ENCODE measurements at regions of chr1 and their contacts with region 1.

Region 1: DNA sequence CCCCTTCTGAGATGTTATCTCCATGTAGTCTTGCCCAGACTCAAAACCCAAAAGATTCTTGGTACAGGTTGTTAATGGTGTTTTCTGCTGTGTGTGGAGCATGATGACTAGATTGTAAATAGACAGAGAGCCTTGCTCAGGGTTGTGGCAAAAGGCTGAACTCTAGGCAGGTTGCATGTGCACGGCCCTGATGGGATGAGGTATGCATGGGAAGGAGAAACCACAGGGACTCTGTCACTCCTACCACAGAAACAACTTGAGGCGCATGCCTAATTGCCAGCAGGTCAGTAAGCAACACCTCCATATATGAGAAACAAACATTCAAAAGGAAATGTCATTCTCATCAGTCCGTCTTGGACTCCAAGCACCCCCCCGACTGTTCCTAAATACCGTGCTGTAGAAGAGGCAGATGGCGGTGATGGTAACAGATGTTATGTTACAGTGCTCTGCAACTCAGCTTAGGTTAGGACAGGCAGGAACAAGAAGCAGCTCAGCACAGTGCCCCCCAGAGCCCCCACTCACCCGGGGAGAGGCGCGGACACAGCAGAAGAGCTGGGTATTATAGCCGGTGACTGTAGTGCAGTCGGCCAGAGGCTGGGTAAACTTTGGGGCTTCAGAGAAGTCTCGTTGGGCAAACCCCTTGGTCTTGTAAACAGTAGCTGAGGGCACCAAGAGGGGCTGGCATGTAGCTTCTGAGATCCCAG is 10.9 kb downstream of the MYBPHL start:
- DNase-seq: no peak
- H3K4me3 ChIP-seq: no peak overlapping the region
- H3K27ac ChIP-seq: no peak overlapping the region
- H3K4me1 ChIP-seq: 0 out of 2 replicates have a peak, but pooled peaks cover 7% of the 10 kb centered on the region
- H3K27me3 ChIP-seq: no peaks in the 10 kb centered on the region
- CTCF ChIP-seq: no peak

Region 2: GRCh38 chr1:108559215-108560186 is 736.4 kb before region 1 on chr1 and contains the start of gene EEIG2:
- CTCF ChIA-PET with region 1: interaction called, 10 read pairs
- POLR2A ChIA-PET with region 1: no interaction called
- intact Hi-C with region 1: no loop called
- DNase-seq: peak; percentile 69 to 89
- H3K4me3 ChIP-seq: peak within 1 kb of the TSS; percentile 69
- H3K27ac ChIP-seq: 0 out of 2 replicates have a peak within 1 kb of the TSS, but pooled peaks have one; percentile 18
- H3K4me1 ChIP-seq: peaks cover 26% of the 10 kb centered on the region
- H3K27me3 ChIP-seq: no peaks in the 10 kb centered on the region
- CTCF ChIP-seq: peak; percentile 62; the same call in 1 of the 2 replicates
- total RNA-seq, gene EEIG2: 31.6 and 31.9 TPM in 2 replicates

Region 3: GRCh38 chr1:108913105-108913948 is 382.5 kb before region 1 on chr1:
- CTCF ChIA-PET with region 1: no interaction called
- POLR2A ChIA-PET with region 1: no interaction called
- intact Hi-C with region 1: no loop called
- DNase-seq: no peak
- H3K4me3 ChIP-seq: no peak overlapping the region
- H3K27ac ChIP-seq: no peak overlapping the region
- H3K4me1 ChIP-seq: no peaks in the 10 kb centered on the region
- H3K27me3 ChIP-seq: no peaks in the 10 kb centered on the region
- CTCF ChIP-seq: no peak

Region 4: DNA sequence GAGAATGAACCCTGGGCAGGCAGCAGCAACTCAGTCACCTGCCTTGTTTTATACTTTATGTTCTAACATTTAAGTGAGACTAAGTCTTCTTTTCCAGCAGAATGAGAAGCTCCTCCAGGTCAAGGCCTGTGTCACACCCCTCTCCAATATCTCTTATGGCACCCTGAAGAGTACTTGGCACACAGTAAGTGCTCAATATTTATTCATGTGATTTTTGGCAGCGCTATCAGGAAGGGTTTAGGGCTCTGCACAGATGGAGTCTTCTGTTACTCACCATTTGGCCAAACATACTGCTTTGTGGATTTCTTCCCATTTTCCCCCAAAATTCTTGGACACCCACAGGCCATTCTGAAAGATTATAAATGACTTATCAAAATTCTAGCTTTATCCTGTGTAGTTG is 54.8 kb after region 1 on chr1:
- CTCF ChIA-PET with region 1: no interaction called
- POLR2A ChIA-PET with region 1: no interaction called
- intact Hi-C with region 1: no loop called
- DNase-seq: no peak
- H3K4me3 ChIP-seq: no peak overlapping the region
- H3K27ac ChIP-seq: no peak overlapping the region
- H3K4me1 ChIP-seq: no peaks in the 10 kb centered on the region
- H3K27me3 ChIP-seq: no peaks in the 10 kb centered on the region
- CTCF ChIP-seq: no peak